ENCODE measurements at regions of chr6 and their contacts with region 1.

Region 1: DNA sequence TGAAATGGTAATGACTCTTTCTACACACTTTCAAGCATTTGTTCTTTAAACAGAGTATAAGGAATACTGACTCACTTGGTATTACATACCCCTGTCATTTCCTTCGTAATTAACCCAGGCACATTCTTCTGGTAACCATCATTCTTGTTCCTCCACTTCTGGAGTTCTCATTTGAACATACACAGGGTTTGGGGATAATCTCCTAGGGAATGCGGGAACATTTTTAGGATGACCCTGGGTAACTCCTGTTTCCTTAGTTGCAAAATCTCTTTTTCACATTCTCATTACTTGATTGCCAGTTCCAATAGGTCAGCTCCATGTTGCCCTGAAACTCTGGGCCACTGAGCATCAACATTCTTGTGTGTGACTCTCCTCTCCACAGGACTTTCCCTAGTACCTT is 51.5 kb upstream of the E2F3 start:
- DNase-seq: no peak
- H3K4me3 ChIP-seq: no peak overlapping the region
- H3K4me3 Mint-ChIP-seq: no peak overlapping the region
- H3K27ac ChIP-seq: no peak overlapping the region
- H3K27ac Mint-ChIP-seq: peak overlapping the region in 1 of 7 donors; percentile 60
- H3K4me1 ChIP-seq: no peaks in the 10 kb centered on the region
- H3K4me1 Mint-ChIP-seq: peaks cover 0 to 3% (median 2%) of the 10 kb centered on the region in 4 donors
- H3K27me3 ChIP-seq: no peaks in the 10 kb centered on the region
- H3K27me3 Mint-ChIP-seq: no peaks in the 10 kb centered on the region

Region 2: GRCh38 chr6:20334334-20334733 is 15.9 kb before region 1 on chr6:
- CTCF ChIA-PET with region 1: interaction called, 4 read pairs
- POLR2A ChIA-PET with region 1: interaction called, 18 read pairs
- intact Hi-C with region 1: no loop called
- DNase-seq: no peak
- H3K4me3 ChIP-seq: no peak overlapping the region
- H3K4me3 Mint-ChIP-seq: no peak overlapping the region
- H3K27ac ChIP-seq: no peak overlapping the region
- H3K27ac Mint-ChIP-seq: no peak overlapping the region
- H3K4me1 ChIP-seq: peaks cover 21% of the 10 kb centered on the region
- H3K4me1 Mint-ChIP-seq: peaks cover 17 to 22% (median 19%) of the 10 kb centered on the region in 4 donors
- H3K27me3 ChIP-seq: no peaks in the 10 kb centered on the region
- H3K27me3 Mint-ChIP-seq: no peaks in the 10 kb centered on the region

Region 3: GRCh38 chr6:20463396-20463795 is 113.2 kb after region 1 on chr6:
- CTCF ChIA-PET with region 1: no interaction called
- POLR2A ChIA-PET with region 1: no interaction called
- intact Hi-C with region 1: no loop called
- DNase-seq: no peak
- H3K4me3 ChIP-seq: no peak overlapping the region
- H3K4me3 Mint-ChIP-seq: no peak overlapping the region
- H3K27ac ChIP-seq: no peak overlapping the region
- H3K27ac Mint-ChIP-seq: no peak overlapping the region
- H3K4me1 ChIP-seq: peaks cover 6% of the 10 kb centered on the region
- H3K4me1 Mint-ChIP-seq: peaks cover 5 to 18% (median 11%) of the 10 kb centered on the region in 4 donors
- H3K27me3 ChIP-seq: no peaks in the 10 kb centered on the region
- H3K27me3 Mint-ChIP-seq: no peaks in the 10 kb centered on the region